Ovary (tissue), 10 donors: ENCODE measurements at regions of chr22 and their contacts with region 1.

Region 1: DNA sequence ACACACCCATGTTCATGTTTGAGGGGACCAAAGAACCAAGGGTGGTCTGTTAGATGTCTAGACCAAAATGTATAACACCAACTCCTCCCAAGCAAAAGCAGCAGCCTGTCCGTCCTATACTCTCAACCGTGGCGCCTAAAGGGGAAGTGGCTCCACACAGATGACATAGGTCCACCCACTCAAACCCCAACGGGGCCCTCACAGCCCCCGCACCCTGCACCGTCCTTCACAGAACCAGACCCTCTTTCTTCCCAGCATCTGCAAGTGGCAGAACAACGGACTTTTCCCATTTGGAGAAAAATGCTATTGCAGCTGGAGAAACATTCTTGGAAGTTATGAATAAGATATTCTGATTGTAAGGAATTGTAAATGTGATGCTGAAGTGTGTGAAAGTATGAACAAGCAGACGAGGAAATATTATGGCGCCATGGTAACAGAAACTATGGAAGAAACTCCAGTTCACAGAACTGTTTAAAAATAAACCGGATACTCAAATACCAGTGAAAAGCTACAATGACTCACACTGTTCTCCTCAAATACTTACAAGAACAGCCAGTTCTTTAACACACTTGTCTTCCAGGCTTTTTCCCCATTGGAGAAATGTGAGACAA is 76.5 kb upstream of the ARFGAP3 start:
- DNase-seq: no peak
- H3K4me3 ChIP-seq: no peak overlapping the region
- H3K27ac ChIP-seq: no peak overlapping the region
- H3K4me1 ChIP-seq: peaks cover 25% of the 10 kb centered on the region
- H3K27me3 ChIP-seq: no peaks in the 10 kb centered on the region
- CTCF ChIP-seq: no peak
- EP300 ChIP-seq: no peak
- POLR2A ChIP-seq: no peak

Region 2: DNA sequence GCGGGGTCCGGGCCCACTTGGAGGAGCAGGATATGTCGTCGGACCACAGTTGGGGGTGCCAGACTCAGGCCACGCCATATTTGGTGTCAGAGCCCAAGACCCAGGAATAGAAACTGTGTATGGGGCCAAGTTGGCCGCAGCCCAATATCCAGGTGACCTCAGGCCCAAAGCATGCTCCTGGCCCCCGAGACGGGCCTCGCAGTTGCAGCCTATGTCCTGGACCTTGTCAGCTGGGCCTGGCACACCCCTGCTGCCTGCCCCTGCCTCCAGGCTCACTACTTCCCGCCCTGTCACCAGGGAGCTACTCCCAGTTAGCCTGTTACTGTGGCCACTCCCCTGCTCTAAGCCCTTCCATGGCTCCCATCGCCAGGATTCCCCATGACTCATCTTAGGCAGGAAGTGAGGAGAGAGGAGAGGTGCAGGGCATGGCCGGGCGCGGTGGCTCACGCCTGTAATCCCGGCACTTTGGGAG is 236.0 kb before region 1 on chr22:
- intact Hi-C with region 1: loop called in 1 of 4 experiments (anchors 10 kb)
- DNase-seq: peak in 1 of 5 donors; percentile 61
- H3K4me3 ChIP-seq: no peak overlapping the region
- H3K27ac ChIP-seq: peak overlapping the region in 1 of 2 donors; percentile 6
- H3K4me1 ChIP-seq: peaks cover 8% of the 10 kb centered on the region
- H3K27me3 ChIP-seq: no peaks in the 10 kb centered on the region
- CTCF ChIP-seq: no peak
- EP300 ChIP-seq: no peak
- POLR2A ChIP-seq: no peak

Region 3: DNA sequence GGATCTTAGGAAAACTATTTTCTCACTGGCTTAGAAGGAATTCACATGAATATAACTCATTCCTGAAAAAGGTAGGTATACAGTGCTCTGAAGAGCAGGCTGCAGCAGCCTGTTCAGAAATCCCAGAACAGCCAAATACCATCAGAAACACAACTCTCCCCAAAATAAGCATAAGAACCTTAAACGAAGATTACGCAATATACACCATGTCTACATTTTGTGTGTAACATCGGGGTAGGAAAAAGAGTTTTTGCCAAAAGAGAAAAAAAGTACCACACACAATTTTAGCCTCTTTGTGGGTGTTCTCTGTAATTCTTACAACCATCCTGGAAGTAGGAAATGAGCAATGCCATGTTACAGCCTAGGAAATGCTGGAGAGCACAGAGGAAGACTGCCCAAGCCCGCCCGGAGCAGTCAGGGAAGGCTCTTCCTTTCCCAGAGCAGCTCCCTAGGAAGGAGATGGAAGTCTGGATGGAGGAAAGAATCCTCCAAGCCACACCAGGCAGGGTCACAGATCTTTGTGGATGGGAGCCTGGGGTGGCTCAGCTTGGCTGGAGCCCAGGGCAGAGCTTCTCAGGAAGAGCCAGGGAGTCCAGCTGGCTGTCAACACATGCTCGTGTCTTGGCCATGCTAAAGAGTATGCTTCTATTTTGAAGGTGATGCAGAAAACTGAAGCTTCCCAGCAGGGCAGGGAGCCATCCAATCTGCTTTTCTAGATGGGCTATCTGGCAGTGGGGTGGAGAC is 26.8 kb before region 1 on chr22:
- intact Hi-C with region 1: loop called in 1 of 4 experiments (anchors 2 kb)
- DNase-seq: peak; percentile 51 to 72 (median 67)
- H3K4me3 ChIP-seq: no peak overlapping the region
- H3K27ac ChIP-seq: peak overlapping the region in 1 of 2 donors; percentile 3
- H3K4me1 ChIP-seq: peaks cover 44% of the 10 kb centered on the region
- H3K27me3 ChIP-seq: no peaks in the 10 kb centered on the region
- CTCF ChIP-seq: no peak
- EP300 ChIP-seq: no peak
- POLR2A ChIP-seq: no peak